GM12878 (cell line): ENCODE measurements at regions of chr1 and their contacts with region 1.

Region 1: GRCh38 chr1:234188454-234188792 is 184.8 kb upstream of the COA6 start:
- DNase-seq: peak; percentile 12
- ATAC-seq: peak; percentile 54
- H3K4me3 ChIP-seq: no peak overlapping the region
- H3K27ac ChIP-seq: no peak overlapping the region
- H3K4me1 ChIP-seq: no peaks in the 10 kb centered on the region
- H3K27me3 ChIP-seq: peaks cover 0 to 2% of the 10 kb centered on the region in 2 experiments; a peak in 3 of 4 replicates
- CTCF ChIP-seq: peak; percentile 14 to 39 (median 29); a peak in 4 of 6 replicates
- EP300 ChIP-seq: no peak
- POLR2A ChIP-seq: no peak
- RAD21 ChIP-seq: no peak

Region 2: DNA sequence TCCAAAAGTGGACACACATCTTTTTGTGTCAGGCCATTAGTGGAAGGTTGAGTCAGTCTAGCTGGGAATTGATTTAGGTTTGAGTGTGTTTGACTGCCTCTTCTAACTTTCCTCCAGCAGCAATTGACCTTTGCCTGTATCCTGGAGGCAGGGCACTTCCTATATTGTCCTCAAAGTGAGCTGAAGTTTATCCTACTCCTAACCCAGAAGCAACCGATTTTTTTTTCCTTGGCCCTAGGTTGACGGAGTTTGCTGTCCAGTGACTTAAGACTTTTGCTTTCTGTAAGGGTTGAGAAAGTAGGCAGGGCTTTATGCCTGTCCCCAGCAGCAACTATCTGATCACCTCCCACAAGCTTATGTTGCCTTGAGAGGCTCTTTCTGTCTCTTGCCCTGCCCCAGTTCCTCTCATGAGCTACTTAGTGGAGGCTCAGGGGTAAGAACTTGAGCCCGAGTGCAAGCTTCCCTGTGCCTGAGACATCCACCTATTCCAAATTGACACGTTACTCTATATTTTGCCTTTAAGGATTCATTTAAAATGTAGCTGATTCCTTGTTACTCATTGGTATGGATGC is 253.0 kb before region 1 on chr1:
- CTCF ChIA-PET with region 1: no interaction called
- POLR2A ChIA-PET with region 1: no interaction called
- RAD21 ChIA-PET with region 1: no interaction called
- SMC1A ChIA-PET with region 1: no interaction called
- in situ Hi-C with region 1: no loop called
- intact Hi-C with region 1: no loop called
- DNase-seq: no peak
- ATAC-seq: no peak
- H3K4me3 ChIP-seq: no peak overlapping the region
- H3K27ac ChIP-seq: no peak overlapping the region
- H3K4me1 ChIP-seq: no peaks in the 10 kb centered on the region
- H3K27me3 ChIP-seq: no peaks in the 10 kb centered on the region; a peak in 1 of 4 replicates
- CTCF ChIP-seq: no peak
- EP300 ChIP-seq: no peak
- POLR2A ChIP-seq: no peak
- RAD21 ChIP-seq: no peak

Region 3: DNA sequence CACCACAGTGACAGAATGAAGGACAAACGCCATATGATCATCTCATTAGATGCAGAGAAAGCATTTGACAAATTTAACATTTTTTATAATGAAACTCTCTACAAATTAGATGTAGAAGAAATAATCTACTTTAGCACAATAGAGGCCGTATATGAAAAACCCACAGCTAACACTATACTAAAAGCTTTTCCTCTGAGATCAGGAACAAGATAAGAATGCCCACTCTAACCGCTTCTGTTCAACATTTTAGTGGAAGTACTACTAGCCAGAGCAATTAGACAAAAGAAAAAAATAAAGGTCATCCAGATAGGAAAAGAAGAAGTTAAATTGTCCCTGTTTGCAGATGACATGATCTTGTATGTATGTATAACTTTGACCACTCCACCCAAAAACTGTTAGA is 174.2 kb before region 1 on chr1:
- CTCF ChIA-PET with region 1: no interaction called
- POLR2A ChIA-PET with region 1: no interaction called
- RAD21 ChIA-PET with region 1: no interaction called
- SMC1A ChIA-PET with region 1: no interaction called
- in situ Hi-C with region 1: no loop called
- intact Hi-C with region 1: no loop called
- DNase-seq: no peak
- ATAC-seq: no peak
- H3K4me3 ChIP-seq: no peak overlapping the region
- H3K27ac ChIP-seq: no peak overlapping the region
- H3K4me1 ChIP-seq: no peaks in the 10 kb centered on the region
- H3K27me3 ChIP-seq: no peaks in the 10 kb centered on the region; a peak in 1 of 4 replicates
- CTCF ChIP-seq: no peak
- EP300 ChIP-seq: no peak
- POLR2A ChIP-seq: no peak
- RAD21 ChIP-seq: no peak

Region 4: GRCh38 chr1:234176000-234176399 is 12.4 kb before region 1 on chr1:
- CTCF ChIA-PET with region 1: interaction called, 13 read pairs
- POLR2A ChIA-PET with region 1: no interaction called
- RAD21 ChIA-PET with region 1: no interaction called
- SMC1A ChIA-PET with region 1: interaction called, 3 read pairs
- in situ Hi-C with region 1: no loop called
- intact Hi-C with region 1: no loop called
- DNase-seq: no peak
- ATAC-seq: no peak
- H3K4me3 ChIP-seq: no peak overlapping the region
- H3K27ac ChIP-seq: no peak overlapping the region
- H3K4me1 ChIP-seq: no peaks in the 10 kb centered on the region
- H3K27me3 ChIP-seq: peaks cover 0 to 2% of the 10 kb centered on the region in 2 experiments; a peak in 1 of 4 replicates
- CTCF ChIP-seq: no peak
- EP300 ChIP-seq: no peak
- POLR2A ChIP-seq: no peak
- RAD21 ChIP-seq: no peak